WTC11 (cell line): ENCODE measurements at regions of chr3 and their contacts with region 1.

Region 1: DNA sequence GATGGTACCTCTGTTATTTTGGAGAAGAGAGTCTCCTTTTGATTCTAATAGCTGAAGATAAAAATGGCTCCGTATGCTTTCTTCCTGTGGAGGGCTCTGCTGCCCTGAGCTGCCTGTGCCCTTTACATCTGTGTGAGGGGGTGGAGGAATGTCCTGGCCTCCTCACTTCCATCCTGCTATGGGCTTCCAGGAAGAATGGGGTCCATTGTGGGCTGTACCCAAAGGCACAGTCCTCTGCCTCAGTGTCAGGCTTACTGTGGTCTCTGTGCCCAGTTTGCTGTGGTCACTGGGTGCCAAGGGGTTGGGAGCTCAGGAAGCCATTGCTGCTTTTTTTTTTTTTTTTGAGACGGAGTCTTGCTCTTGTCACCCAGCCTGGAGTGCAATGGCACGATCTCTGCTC is 14.4 kb downstream of the DAG1 start:
- DNase-seq: no peak
- ATAC-seq: peak; percentile 33; the same call in 1 of the 2 replicates
- H3K4me3 Mint-ChIP-seq: no peak overlapping the region
- H3K27ac Mint-ChIP-seq: peak overlapping the region; percentile 78; the same call in 1 of the 2 replicates
- H3K4me1 Mint-ChIP-seq: peaks cover 18% of the 10 kb centered on the region
- H3K27me3 Mint-ChIP-seq: no peaks in the 10 kb centered on the region
- CTCF ChIP-seq: no peak

Region 2: DNA sequence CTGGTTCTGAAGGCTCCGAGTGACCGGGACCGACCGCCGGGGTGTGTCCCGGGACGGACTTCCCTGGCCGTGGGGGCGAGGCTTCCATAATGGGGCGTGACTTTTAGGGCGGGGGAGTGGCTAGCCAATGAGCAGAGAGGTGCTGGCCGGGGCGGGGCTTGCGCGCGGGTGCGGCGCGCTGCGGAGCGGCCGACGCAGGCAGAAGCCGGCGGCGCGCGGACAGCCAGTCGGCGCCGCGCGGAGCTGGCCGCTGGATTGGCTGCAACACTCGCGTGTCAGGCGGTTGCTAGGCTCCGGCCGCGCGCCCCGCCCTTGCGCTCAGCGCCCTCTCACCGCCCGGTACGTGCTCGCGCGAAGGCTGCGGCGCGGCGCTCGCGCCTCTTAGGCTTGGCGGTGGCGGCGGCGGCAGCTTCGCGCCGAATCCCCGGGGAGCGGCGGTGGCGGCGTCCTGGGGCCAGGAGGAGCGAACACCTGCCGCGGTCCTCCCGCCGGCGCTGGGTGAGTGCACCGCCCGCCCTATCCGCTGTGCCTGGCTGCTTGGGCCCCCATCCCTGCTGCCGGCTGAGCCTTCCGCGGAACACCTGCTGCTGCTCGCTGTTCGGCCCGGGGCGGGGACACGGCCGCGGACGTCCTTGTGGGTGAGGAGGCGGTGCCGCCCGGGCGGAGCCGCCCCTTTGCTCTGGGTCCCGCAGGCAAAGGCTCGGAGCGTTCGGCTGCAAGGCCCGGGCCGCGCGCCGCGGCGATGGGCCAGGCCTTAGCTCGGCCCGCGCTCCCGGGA is 14.3 kb before region 1 on chr3 and contains the start of gene DAG1:
- CTCF ChIA-PET with region 1: interaction called, 4 read pairs
- POLR2A ChIA-PET with region 1: interaction called, 10 read pairs
- DNase-seq: peak; percentile 99
- ATAC-seq: peak; percentile 89
- H3K4me3 Mint-ChIP-seq: peak within 1 kb of the TSS; percentile 95
- H3K27ac Mint-ChIP-seq: peak within 1 kb of the TSS; percentile 100
- H3K4me1 Mint-ChIP-seq: peaks cover 27% of the 10 kb centered on the region
- H3K27me3 Mint-ChIP-seq: no peaks in the 10 kb centered on the region
- CTCF ChIP-seq: no peak
- total RNA-seq, gene DAG1: 113 to 119 TPM (median 115 TPM) in 3 replicates

Region 3: GRCh38 chr3:49582177-49582576 is 97.7 kb after region 1 on chr3:
- CTCF ChIA-PET with region 1: no interaction called
- POLR2A ChIA-PET with region 1: no interaction called
- DNase-seq: no peak
- ATAC-seq: no peak
- H3K4me3 Mint-ChIP-seq: no peak overlapping the region
- H3K27ac Mint-ChIP-seq: no peak overlapping the region
- H3K4me1 Mint-ChIP-seq: no peaks in the 10 kb centered on the region; the same call in 1 of the 2 replicates
- H3K27me3 Mint-ChIP-seq: no peaks in the 10 kb centered on the region
- CTCF ChIP-seq: no peak